Mammary epithelial cell (primary cell): ENCODE measurements at regions of chr22 and their contacts with region 1.

Region 1: DNA sequence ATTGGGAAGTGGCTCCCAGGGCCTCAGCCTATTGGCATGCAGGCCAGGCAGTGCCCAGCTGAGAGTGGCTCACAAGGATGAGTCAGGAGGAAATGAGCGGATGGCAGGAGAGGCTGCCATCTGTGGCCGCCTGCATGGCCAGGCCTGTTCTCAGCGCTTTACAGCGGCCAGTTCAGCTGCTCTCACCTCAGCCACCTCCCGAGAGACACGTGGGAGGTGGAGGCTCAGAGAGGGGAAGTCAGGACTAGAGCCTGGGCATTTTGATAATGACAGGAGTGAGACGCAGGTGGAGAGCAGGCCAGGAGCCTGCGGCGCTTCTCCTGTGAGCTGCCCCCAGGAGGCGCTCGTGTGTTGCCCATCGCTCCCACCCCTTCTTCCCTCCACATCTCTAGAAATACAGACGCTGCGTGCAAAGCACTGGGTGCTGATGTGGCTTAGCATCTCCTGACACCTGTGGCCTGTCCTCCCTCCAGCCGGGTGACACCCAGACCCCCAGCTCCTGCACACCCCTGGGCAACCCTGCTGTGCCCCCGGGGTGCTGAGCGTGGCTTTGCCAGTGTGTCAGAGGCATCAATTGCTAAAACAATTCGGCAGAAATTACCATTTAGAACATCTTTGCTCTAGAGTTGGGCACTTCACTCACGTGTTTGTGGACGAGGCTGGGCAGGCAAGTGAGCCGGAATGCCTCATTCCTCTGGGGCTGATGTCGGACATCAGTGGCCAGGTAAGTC is 21.4 kb upstream of the PANX2 start:
- DNase-seq: peak; percentile 98
- H3K4me3 ChIP-seq: no peak overlapping the region
- H3K27ac ChIP-seq: no peak overlapping the region
- H3K4me1 ChIP-seq: peaks cover 13% of the 10 kb centered on the region
- H3K27me3 ChIP-seq: no peaks in the 10 kb centered on the region
- CTCF ChIP-seq: peak; percentile 93 to 94

Region 2: DNA sequence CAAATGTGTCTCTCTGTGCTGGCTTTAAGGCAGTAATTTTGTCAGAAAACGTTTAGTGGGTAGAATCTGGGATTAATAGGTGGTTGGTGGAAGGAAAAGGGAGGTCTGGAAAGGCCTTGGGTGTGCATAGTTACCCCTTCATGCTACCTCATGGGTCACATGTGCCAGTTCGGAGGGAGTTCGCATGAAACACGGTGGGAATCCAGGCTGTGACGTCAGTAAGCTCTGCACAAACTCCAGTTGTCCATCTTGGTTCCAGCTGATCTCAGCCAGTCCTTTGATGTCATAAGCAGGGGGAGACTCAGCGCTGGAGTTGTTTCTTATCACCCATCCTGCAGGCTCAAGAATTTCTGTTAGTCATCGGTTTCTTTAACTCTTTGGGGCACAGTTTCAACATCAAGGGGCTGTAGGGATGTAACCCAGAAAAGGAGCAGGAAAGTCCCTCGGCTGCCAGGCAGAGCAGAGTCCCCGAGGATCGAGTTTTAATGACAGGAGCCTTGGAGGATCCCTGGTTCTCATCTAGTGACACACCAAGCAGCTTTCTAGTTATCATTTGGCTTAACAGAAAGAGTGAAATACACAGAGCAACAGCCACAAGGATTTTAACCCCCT is 30.5 kb before region 1 on chr22:
- CTCF ChIA-PET with region 1: no interaction called
- dilution Hi-C with region 1: loop called (anchors 5 kb)
- in situ Hi-C with region 1: no loop called
- intact Hi-C with region 1: no loop called
- DNase-seq: no peak
- H3K4me3 ChIP-seq: no peak overlapping the region
- H3K27ac ChIP-seq: no peak overlapping the region
- H3K4me1 ChIP-seq: peaks cover 10% of the 10 kb centered on the region
- H3K27me3 ChIP-seq: no peaks in the 10 kb centered on the region
- CTCF ChIP-seq: no peak

Region 3: GRCh38 chr22:50209893-50210292 is 60.7 kb after region 1 on chr22:
- CTCF ChIA-PET with region 1: interaction called, 3 read pairs
- dilution Hi-C with region 1: loop called (anchors 5 kb)
- in situ Hi-C with region 1: loop called (anchors 5 to 10 kb)
- intact Hi-C with region 1: loop called (anchors 1 kb)
- DNase-seq: peak; percentile 37
- H3K4me3 ChIP-seq: no peak overlapping the region
- H3K27ac ChIP-seq: no peak overlapping the region
- H3K4me1 ChIP-seq: no peaks in the 10 kb centered on the region
- H3K27me3 ChIP-seq: no peaks in the 10 kb centered on the region
- CTCF ChIP-seq: peak; percentile 83 to 93

Region 4: DNA sequence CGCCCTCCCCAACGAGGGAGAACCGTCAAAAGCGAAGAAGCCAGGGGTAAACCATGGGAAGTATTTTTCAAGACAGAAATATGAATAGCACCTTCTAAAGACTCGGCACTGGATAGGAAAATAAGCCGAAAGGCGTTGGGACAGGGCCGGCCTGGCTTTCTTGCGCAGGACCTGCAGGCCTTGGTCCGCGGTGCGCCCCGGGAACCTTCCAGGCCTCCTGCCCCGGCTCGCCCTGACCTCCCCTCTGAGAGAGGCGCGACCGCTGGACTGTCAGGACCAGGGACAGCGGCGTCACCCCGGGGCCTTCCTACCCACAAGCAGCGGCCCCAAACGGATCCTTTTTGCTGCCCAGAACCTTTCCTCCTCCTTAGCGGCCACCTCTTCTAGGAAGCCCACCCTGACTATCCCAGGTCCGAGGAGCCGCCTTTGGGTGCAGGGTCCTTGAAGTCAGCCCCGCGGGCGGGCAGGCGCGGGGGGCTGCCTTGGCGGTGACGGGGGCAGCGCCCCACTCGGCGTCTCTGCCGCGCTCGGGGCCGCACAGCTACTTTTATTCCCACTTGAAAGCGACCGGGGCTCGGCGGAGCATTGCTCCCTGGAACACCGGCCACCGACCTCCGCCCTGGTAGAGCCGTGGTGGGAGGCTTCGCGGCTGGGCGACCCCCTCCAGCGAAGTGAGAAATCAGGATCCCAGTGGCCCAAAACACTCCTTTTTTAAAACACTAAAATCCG is 121.7 kb after region 1 on chr22:
- CTCF ChIA-PET with region 1: interaction called, 16 read pairs
- dilution Hi-C with region 1: no loop called
- in situ Hi-C with region 1: no loop called
- intact Hi-C with region 1: no loop called
- DNase-seq: peak; percentile 64
- H3K4me3 ChIP-seq: peak overlapping the region; percentile 48 to 53 (median 53)
- H3K27ac ChIP-seq: no peak overlapping the region
- H3K4me1 ChIP-seq: peaks cover 29% of the 10 kb centered on the region
- H3K27me3 ChIP-seq: no peaks in the 10 kb centered on the region
- CTCF ChIP-seq: no peak

Region 5: DNA sequence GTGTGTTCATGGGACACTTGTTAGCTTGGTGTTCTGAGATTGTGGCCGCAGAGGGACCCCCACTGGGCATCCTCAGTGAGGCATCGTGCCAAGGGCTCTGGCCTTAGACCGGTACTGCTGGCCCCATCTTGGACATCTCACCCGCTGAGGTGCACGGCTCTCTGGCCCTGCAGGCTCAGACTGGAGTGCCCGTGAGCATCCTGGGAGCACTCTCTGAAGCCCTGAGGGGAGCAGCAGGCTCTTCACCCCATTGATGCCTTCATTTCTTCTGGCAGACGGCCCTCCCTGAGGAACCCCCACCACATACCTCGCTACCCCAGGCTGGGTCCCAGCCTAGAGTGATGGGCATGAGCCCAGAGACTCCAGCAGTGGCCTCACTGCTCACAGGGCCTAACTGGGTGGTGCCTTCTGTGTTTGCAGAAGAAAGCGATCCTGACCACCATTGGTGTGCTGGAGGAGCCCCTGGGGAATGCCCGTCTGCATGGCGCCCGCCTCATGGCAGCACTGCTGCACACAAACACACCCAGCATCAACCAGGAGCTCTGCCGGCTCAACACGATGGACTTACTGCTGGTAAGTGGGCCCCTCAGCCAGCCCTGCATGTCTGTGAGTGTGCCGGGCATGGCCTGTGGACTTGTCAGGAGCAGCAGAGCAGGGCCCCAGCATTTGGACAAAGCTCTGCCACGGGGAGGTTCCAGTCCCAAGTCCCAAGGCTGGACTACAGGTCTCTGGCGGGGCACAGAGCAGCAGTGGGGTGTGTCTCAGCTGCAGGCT is 274.1 kb after region 1 on chr22:
- CTCF ChIA-PET with region 1: no interaction called
- dilution Hi-C with region 1: loop called (anchors 5 kb)
- in situ Hi-C with region 1: no loop called
- intact Hi-C with region 1: no loop called
- DNase-seq: no peak
- H3K4me3 ChIP-seq: no peak overlapping the region
- H3K27ac ChIP-seq: no peak overlapping the region
- H3K4me1 ChIP-seq: no peaks in the 10 kb centered on the region
- H3K27me3 ChIP-seq: no peaks in the 10 kb centered on the region
- CTCF ChIP-seq: no peak